ENCODE measurements at regions of chr6 and their contacts with region 1.

Region 1: DNA sequence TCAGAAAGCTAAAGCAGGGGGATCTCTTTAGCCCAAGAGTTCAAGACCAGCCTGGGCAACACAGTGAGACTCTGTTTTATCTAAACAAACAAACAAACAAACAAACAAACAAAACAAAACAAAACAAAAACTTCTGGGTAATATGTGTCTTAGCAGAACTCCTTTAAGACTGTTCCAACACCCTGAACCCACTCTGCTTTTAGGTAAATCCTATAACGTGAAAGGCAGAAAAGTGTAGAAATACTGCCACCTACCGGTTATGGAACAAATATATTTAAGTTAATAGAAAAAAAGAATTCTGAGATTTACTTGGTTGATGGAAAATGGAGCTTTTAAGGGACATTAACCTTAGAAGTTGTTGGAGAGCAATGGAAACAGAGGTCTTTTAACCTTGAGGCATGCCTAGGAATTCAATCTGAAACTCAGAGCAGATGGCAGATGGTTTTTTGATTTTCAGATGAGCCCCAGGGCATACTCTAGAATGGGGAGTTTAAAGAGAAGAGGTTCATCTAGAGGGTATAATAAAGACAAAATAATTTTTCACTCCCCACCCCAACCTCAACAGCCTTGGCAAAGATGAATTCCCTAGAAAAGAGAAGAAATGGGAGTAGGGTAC is 38.5 kb downstream of the SOD2 start:
- DNase-seq: no peak
- H3K4me3 ChIP-seq: no peak overlapping the region
- H3K27ac ChIP-seq: no peak overlapping the region
- H3K4me1 ChIP-seq: peaks cover 0 to 2% (median 0%) of the 10 kb centered on the region in 4 donors
- H3K27me3 ChIP-seq: no peaks in the 10 kb centered on the region
- CTCF ChIP-seq: peak in 3 of 4 experiments; percentile 36 to 63 (median 58)
- EP300 ChIP-seq: no peak
- POLR2A ChIP-seq: no peak

Region 2: DNA sequence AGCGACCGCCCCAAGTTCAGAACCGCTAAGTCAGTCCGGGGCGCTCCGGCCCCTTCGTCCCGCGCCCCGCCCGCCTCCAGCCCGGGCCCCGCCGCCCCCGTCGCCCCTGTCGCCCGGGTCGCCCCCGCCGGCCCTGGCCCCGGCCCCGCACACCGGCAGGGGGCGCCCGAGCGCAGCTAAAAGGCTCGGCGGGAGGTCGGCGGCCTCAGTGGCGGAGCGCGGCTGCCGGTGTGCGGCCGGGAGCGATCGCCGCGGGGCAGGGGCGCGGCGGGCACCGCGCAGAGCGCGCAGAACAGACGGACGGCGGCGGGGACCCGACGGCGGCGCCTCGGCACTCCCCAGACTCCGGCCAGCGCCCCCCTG is 485.4 kb before region 1 on chr6 and contains the start of gene FNDC1:
- intact Hi-C with region 1: loop called (anchors 2 kb)
- DNase-seq: no peak
- H3K4me3 ChIP-seq: peak within 1 kb of the TSS; percentile 13 to 53 (median 42)
- H3K27ac ChIP-seq: peak within 1 kb of the TSS in 3 of 4 donors; percentile 42 to 63 (median 58)
- H3K4me1 ChIP-seq: peaks cover 0 to 25% (median 17%) of the 10 kb centered on the region in 4 donors
- H3K27me3 ChIP-seq: peaks cover 0 to 78% (median 32%) of the 10 kb centered on the region in 3 donors
- CTCF ChIP-seq: no peak
- EP300 ChIP-seq: no peak
- POLR2A ChIP-seq: no peak
- total RNA-seq, gene FNDC1: 4.3 to 19.8 (median 17.2) TPM

Region 3: GRCh38 chr6:159174263-159174969 is 480.2 kb before region 1 on chr6:
- intact Hi-C with region 1: loop called (anchors 2 kb)
- DNase-seq: peak; percentile 82
- H3K4me3 ChIP-seq: no peak overlapping the region
- H3K27ac ChIP-seq: no peak overlapping the region
- H3K4me1 ChIP-seq: peaks cover 0 to 20% (median 18%) of the 10 kb centered on the region in 4 donors
- H3K27me3 ChIP-seq: peaks cover 0 to 52% (median 20%) of the 10 kb centered on the region in 3 donors
- CTCF ChIP-seq: peak; percentile 29 to 89 (median 70)
- EP300 ChIP-seq: no peak
- POLR2A ChIP-seq: no peak

Region 4: DNA sequence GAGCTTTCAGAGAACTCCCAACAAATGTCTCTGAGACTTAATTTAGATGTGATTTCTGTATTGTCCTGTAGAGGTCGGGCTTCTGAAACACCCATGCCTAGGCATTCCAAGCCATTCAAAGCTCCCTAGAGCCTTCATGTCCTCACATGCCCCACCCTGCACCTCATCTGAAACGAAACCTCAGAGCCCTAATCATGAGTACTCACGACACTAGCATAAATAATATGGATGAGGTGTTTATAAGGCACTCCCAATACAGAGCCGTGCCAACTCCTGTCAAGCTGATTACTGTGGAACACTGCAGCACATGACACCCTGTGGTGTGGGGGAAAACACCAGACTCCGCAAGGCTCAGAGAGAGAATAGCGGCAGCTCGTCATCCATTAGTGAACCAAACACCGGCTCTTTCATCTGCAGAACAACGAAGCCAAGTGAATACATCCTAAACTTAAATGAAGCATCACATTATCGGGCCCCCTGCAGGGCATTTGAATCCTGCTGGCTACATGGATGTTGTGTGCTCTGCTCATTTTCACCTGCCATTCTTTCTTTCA is 401.6 kb before region 1 on chr6:
- intact Hi-C with region 1: loop called (anchors 10 kb)
- DNase-seq: no peak
- H3K4me3 ChIP-seq: peak overlapping the region in 2 of 4 donors; percentile 18 to 21
- H3K27ac ChIP-seq: peak overlapping the region in 2 of 4 donors; percentile 4 to 43
- H3K4me1 ChIP-seq: peaks cover 0 to 15% (median 3%) of the 10 kb centered on the region in 4 donors
- H3K27me3 ChIP-seq: no peaks in the 10 kb centered on the region
- CTCF ChIP-seq: peak in 3 of 4 experiments; percentile 31 to 53 (median 34)
- EP300 ChIP-seq: peak in 1 of 4 donors; percentile 2
- POLR2A ChIP-seq: no peak

Region 5: DNA sequence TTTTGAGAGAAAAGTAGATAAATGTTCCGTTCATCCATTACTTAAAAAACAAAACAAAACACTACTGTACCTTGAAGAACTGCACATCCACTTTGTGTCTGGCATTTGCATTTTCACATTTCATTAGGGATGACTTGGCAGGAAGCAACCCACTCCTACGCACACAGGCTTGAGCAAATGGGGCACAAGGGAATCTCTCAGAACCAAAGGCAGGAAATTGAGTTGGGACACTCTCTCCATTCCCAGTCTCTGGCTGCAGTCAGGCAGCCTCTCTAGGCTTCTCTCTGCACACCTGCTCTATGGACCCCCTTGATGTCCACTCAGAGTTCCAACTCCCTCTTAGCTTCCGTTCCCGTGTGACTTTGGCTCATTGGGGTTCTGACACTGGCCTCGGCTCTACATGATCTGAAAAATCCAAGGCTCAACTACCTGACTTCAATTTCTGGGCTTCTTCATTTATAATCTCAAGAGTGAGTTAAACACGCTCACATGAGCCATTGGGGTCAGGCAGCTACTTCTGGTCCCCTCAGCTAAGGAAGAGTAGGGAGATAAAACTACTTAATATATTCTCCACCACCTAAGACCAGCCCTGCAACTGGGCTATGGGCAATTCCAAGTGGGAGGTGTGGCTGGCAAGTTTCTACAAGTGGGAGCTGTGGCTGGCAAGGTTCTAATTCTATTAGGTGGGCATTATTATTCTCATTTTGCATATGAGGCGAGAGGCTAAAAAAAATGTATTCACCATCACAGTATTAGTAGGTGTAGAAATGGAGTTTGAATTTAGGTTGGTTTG is 213.5 kb before region 1 on chr6:
- intact Hi-C with region 1: no loop called
- DNase-seq: no peak
- H3K4me3 ChIP-seq: no peak overlapping the region
- H3K27ac ChIP-seq: no peak overlapping the region
- H3K4me1 ChIP-seq: no peaks in the 10 kb centered on the region
- H3K27me3 ChIP-seq: no peaks in the 10 kb centered on the region
- CTCF ChIP-seq: no peak
- EP300 ChIP-seq: no peak
- POLR2A ChIP-seq: no peak

Region 6: GRCh38 chr6:159602431-159603041 is 52.1 kb before region 1 on chr6:
- intact Hi-C with region 1: no loop called
- DNase-seq: no peak
- H3K4me3 ChIP-seq: no peak overlapping the region
- H3K27ac ChIP-seq: no peak overlapping the region
- H3K4me1 ChIP-seq: no peaks in the 10 kb centered on the region
- H3K27me3 ChIP-seq: no peaks in the 10 kb centered on the region
- CTCF ChIP-seq: no peak
- EP300 ChIP-seq: no peak
- POLR2A ChIP-seq: no peak

Region 7: GRCh38 chr6:159720708-159721107 is 66.1 kb after region 1 on chr6:
- intact Hi-C with region 1: no loop called
- DNase-seq: no peak
- H3K4me3 ChIP-seq: no peak overlapping the region
- H3K27ac ChIP-seq: no peak overlapping the region
- H3K4me1 ChIP-seq: peaks cover 0 to 26% (median 24%) of the 10 kb centered on the region in 4 donors
- H3K27me3 ChIP-seq: no peaks in the 10 kb centered on the region
- CTCF ChIP-seq: no peak
- EP300 ChIP-seq: no peak
- POLR2A ChIP-seq: no peak

Measured in sigmoid colon (tissue), 7 donors.